ENCODE measurements at regions of chr1 and their contacts with region 1.

Region 1: DNA sequence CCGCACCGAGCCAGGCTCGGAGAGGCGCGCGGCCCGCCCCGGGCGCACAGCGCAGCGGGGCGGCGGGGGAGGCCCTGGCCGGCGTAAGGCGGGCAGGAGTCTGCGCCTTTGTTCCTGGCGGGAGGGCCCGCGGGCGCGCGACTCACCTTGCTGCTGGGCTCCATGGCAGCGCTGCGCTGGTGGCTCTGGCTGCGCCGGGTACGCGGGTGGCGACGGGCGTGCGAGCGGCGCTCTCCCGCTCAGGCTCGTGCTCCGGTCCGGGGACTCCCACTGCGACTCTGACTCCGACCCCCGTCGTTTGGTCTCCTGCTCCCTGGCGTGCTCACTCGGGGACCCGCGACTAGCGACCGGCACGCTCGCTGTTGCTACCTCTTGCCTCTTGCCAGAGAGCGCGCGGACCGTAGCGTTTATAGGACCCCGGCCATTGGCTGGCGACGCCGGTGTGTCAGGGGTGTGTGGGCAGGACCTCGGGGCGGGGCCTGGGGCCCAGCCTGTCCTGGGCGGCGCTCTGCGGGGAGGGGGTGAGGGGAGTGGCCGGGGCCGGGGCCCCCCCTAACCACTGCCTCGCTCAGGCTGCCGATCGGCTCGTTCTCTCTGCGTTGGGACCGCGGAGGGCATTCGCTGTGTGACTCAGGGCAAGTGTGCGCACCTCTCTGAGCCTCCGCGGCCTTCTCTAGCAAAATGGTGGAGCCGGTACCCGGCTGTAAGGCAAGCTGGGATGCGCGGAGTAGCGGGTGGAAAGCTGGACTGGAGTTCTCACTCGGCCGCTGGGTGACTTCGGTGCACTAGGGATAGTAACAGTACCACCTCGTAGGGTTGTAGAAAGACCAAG is at the start of gene SLC2A1:
- DNase-seq: peak; percentile 94
- H3K4me3 ChIP-seq: peak within 1 kb of the TSS; percentile 43 to 79 (median 57)
- H3K27ac ChIP-seq: peak within 1 kb of the TSS; percentile 68
- H3K4me1 ChIP-seq: peaks cover 16% of the 10 kb centered on the region
- H3K27me3 ChIP-seq: no peaks in the 10 kb centered on the region
- CTCF ChIP-seq: no peak
- POLR2A ChIP-seq: peak; percentile 73
- total RNA-seq, gene SLC2A1: 38.7 and 42.2 TPM in 2 replicates

Region 2: DNA sequence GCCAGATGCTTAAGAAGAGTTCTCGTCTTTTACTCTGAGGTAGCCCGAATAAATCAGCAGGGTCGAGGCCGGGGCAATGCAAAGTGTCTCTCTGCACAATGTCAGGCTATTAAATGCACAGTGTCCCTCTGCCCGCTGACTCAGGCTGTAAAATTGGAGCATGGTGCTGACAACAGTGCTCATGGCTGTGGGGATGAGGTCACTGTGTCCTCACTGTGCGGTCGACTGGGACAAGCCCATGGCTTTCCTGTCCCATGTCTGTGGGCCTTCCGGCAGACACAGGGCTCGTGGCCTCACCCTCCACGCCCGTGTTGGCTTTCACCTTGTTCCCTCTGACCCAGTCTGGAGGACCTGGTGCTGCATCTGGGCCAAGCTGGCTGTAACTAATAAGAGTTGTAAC is 14.6 kb after region 1 on chr1:
- CTCF ChIA-PET with region 1: interaction called, 6 read pairs
- POLR2A ChIA-PET with region 1: no interaction called
- dilution Hi-C with region 1: no loop called
- intact Hi-C with region 1: loop called (anchors 2 kb)
- DNase-seq: no peak
- H3K4me3 ChIP-seq: no peak overlapping the region
- H3K27ac ChIP-seq: no peak overlapping the region
- H3K4me1 ChIP-seq: peaks cover 3% of the 10 kb centered on the region
- H3K27me3 ChIP-seq: no peaks in the 10 kb centered on the region
- CTCF ChIP-seq: no peak
- POLR2A ChIP-seq: no peak

Region 3: GRCh38 chr1:42979896-42980800 is 21.4 kb after region 1 on chr1:
- CTCF ChIA-PET with region 1: no interaction called
- POLR2A ChIA-PET with region 1: interaction called, 10 read pairs
- dilution Hi-C with region 1: no loop called
- intact Hi-C with region 1: loop called (anchors 2 kb)
- DNase-seq: no peak
- H3K4me3 ChIP-seq: no peak overlapping the region
- H3K27ac ChIP-seq: no peak overlapping the region
- H3K4me1 ChIP-seq: peaks cover 12% of the 10 kb centered on the region
- H3K27me3 ChIP-seq: no peaks in the 10 kb centered on the region
- CTCF ChIP-seq: no peak
- POLR2A ChIP-seq: no peak

Measured in endothelial cell of umbilical vein (primary cell).